ENCODE measurements at regions of chr3 and their contacts with region 1.

Region 1: GRCh38 chr3:133821767-133822638 is 16.4 kb downstream of the SRPRB start:
- DNase-seq: no peak

Region 2: GRCh38 chr3:133805527-133806475 is 16.2 kb before region 1 on chr3 and contains the start of gene SRPRB:
- CTCF ChIA-PET with region 1: interaction called, 10 read pairs
- POLR2A ChIA-PET with region 1: no interaction called
- DNase-seq: peak; percentile 97

Region 3: GRCh38 chr3:133843634-133844033 is 21.6 kb after region 1 on chr3:
- CTCF ChIA-PET with region 1: no interaction called
- POLR2A ChIA-PET with region 1: no interaction called
- DNase-seq: no peak

Measured in HEK293T (cell line).